Motor neuron (in vitro differentiated cells): ENCODE measurements at regions of chr17 and their contacts with region 1.

Region 1: GRCh38 chr17:6421700-6422604 is 13.0 kb downstream of the AIPL1 start:
- ATAC-seq: peak; percentile 91 to 96 (median 93)
- H3K4me3 ChIP-seq: no peak overlapping the region
- H3K27ac ChIP-seq: no peak overlapping the region
- H3K4me1 ChIP-seq: peaks cover 0 to 2% of the 10 kb centered on the region in 2 donors

Region 2: DNA sequence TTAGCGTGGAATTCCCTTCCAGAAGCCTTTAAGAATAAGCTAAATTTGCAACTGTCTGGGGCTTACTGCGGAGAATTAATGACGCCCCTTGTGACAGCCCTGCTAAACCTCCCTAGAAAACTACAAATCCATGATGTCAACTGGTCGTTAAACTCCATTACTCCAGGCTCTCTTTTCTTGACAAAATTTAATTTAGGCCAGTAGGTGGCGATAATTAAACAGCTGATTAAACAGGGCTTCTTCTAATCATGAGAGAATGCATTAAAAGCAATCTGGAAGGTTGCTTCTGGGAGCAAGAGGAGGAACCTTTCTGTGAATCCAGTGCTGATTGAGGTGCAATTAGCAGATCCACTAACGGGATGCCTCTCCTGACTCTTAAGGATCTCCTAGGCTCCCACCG is 829.6 kb before region 1 on chr17:
- in situ Hi-C with region 1: loop called in 7 of 9 experiments (anchors 10 to 25 kb)
- ATAC-seq: peak; percentile 54 to 78 (median 68)
- H3K4me3 ChIP-seq: no peak overlapping the region
- H3K27ac ChIP-seq: no peak overlapping the region
- H3K4me1 ChIP-seq: peaks cover 0 to 4% of the 10 kb centered on the region in 2 donors

Region 3: DNA sequence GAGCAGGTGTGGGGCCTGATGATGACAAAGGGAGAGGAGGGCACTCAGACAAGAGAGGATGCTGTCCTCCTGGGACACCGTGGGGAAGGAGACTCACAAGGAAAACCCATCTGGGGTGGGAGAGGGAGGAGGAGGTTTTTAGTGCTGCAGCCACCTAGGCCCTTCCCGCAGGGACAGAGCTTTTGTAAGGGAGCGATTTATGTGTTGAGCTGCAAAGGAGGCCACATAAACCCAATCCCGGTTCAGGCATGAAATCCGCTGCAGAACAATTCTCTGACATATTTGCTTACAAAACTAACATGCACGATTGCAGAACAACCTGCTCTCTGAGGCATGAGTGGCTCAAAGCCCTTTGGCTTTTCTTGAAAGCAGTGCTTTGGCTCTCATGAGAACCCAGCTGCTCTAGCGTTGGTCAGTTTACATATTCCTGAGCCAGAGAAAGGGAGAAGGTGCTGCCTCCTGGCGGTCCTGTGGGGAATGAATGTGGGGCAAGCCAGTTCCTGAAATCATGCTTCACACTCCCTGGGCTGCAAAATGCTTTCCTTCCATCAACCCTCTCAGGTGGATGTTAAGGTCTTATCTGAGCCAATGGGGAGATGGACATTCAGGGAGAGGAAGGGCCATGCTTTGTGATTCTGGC is 715.3 kb before region 1 on chr17:
- in situ Hi-C with region 1: loop called in 2 of 9 experiments (anchors 25 kb)
- ATAC-seq: peak; percentile 59 to 91 (median 87)
- H3K4me3 ChIP-seq: no peak overlapping the region
- H3K27ac ChIP-seq: peak overlapping the region; percentile 14 to 65
- H3K4me1 ChIP-seq: peaks cover 18 to 20% of the 10 kb centered on the region in 2 donors

Region 4: DNA sequence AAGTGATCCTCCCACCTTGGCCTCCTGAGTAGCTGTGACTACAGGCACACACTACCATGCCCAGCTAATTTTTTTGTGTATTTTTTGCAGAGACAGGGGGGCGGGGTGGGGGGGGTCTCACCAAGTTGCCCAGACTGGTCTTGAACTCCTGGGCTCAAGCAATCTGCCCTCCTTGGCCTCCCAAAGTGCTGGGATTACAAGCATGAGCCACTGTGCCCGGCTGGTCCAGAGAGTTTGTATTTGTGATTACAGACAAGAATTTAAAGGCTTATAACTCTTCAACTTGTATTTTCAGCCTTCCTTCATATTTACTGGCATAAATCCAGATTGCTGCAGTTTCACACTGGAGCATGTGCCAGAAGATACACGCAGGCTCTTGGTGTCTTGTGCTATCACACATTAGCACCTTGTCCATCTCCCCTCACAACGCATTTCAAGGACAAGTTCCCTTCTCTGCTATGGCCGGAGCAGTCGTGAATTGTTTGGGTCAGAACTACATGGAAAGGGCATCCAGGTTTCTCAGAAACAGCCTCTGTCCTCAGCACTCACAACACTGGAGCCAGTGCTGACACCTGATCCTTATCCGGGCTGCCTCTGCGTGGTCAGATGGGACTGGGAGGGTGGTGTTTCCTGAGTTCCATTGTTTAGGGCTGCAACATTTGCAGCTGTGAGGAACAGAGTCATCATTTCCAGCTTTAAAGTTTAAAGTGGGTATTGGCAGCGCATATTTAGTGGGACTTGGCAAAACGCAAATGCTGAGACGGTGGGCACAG is 323.7 kb before region 1 on chr17:
- in situ Hi-C with region 1: loop called in 1 of 9 experiments (anchors 25 kb)
- ATAC-seq: no peak
- H3K4me3 ChIP-seq: no peak overlapping the region
- H3K27ac ChIP-seq: no peak overlapping the region
- H3K4me1 ChIP-seq: no peaks in the 10 kb centered on the region